H1 (cell line): ENCODE measurements at regions of chr9 and their contacts with region 1.

Region 1: GRCh38 chr9:136482793-136483588 is at the start of gene SEC16A:
- DNase-seq: peak; percentile 97 to 99
- H3K4me3 ChIP-seq: peak within 1 kb of the TSS; percentile 75 to 98 (median 86)
- H3K27ac ChIP-seq: peak within 1 kb of the TSS; percentile 100
- H3K4me1 ChIP-seq: peaks cover 2 to 13% (median 3%) of the 10 kb centered on the region in 4 experiments
- H3K27me3 ChIP-seq: no peaks in the 10 kb centered on the region
- CTCF ChIP-seq: no peak
- EP300 ChIP-seq: peak in 1 of 2 experiments; percentile 7; a peak in 1 of 3 replicates
- POLR2A ChIP-seq: peak in 1 of 2 experiments; percentile 37; a peak in 1 of 3 replicates
- RAD21 ChIP-seq: no peak
- total RNA-seq, gene SEC16A: 47.1 and 49.0 TPM in 2 replicates

Region 2: DNA sequence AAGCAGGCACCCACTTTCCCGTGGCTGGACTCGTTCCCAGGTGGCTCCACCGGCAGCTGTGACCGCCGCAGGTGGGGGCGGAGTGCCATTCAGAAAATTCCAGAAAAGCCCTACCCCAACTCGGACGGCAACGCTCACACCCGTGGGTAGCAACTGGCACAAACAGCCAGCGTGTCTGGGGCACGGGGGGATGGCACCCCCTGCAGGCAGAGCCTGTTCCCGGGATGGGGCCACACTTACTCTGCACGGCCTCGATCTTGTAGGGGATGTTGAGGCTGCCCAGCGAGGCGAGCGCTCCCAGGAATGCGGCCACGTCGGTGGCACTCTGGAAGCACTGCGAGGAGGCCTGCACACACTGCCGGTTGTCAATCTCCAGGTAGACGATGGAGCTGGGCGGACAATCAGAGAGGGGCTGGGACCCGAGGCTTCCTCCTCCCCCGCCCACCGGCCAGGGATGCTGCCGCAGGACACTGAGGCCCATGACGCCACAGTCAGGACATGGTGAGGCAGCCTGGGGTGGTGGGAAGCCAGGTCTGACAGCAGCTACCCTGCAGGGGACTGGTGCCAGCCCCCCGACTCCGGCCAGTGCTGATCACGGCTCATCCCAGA is 20.1 kb after region 1 on chr9:
- CTCF ChIA-PET with region 1: interaction called, 47 read pairs
- POLR2A ChIA-PET with region 1: no interaction called
- DNase-seq: no peak
- H3K4me3 ChIP-seq: no peak overlapping the region
- H3K27ac ChIP-seq: no peak overlapping the region
- H3K4me1 ChIP-seq: no peaks in the 10 kb centered on the region
- H3K27me3 ChIP-seq: no peaks in the 10 kb centered on the region
- CTCF ChIP-seq: peak in 1 of 3 experiments; percentile 22; a peak in 1 of 4 replicates
- EP300 ChIP-seq: no peak
- POLR2A ChIP-seq: no peak
- RAD21 ChIP-seq: peak in 1 of 2 experiments; percentile 8; a peak in 1 of 4 replicates

Region 3: DNA sequence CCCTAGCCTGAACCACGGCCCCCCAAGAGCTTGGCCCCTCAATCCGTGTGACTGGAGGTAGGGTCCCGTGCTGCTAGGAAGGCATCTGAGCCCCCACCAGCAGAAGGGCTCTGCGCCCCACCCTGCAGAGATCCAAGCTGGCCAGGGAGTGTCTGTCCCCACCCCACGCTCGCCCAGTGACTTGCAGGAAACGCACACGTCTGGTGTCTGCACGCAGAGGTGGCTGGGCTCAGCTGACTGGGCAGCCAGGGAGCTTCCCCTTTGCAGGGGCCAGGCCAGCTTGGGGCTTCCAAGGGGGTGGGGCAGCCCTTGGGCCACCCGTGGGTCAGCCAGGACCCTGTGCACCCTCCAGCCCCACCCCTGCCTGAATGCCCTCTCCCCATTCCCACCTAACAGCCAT is 38.5 kb after region 1 on chr9:
- CTCF ChIA-PET with region 1: interaction called, 25 read pairs
- POLR2A ChIA-PET with region 1: no interaction called
- DNase-seq: no peak
- H3K4me3 ChIP-seq: no peak overlapping the region
- H3K27ac ChIP-seq: no peak overlapping the region
- H3K4me1 ChIP-seq: peaks cover 0 to 4% (median 3%) of the 10 kb centered on the region in 4 experiments; a peak in 3 of 7 replicates
- H3K27me3 ChIP-seq: no peaks in the 10 kb centered on the region
- CTCF ChIP-seq: no peak
- EP300 ChIP-seq: no peak
- POLR2A ChIP-seq: no peak
- RAD21 ChIP-seq: no peak

Region 4: DNA sequence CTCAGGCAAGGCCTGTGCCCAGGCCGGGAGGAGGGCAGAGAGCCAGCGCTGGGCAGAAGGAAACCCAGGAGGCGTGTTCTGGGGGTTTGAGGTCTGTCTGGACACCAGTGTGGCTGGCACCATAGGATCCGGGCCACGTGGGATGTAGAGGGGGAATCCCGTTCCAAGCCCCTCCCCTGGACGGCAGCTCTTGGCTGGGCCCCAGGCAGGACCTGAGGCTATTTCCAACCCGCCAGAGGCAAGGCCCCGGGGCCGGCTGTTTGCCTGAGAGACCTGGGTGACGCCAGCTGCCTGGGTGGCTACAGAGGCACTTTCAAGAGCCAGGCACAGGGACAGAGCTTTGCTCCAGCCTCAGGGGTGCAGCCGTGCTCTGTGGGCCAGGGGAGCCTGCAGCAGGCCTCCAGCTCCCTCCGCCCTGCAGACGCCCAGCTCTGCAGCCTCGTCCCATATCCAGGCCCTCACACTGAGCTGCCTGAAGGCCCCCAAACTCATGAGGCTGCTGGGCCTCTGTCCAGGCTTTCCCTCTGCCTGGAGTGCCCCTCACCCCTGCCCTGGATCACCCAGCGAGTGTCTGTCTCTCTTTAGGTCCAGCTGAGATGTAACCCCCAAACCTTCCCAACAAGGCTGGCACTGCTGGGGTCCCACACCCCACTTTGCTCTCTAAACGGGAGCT is 123.1 kb after region 1 on chr9:
- CTCF ChIA-PET with region 1: interaction called, 13 read pairs
- POLR2A ChIA-PET with region 1: interaction called, 3 read pairs
- DNase-seq: no peak
- H3K4me3 ChIP-seq: no peak overlapping the region
- H3K27ac ChIP-seq: no peak overlapping the region
- H3K4me1 ChIP-seq: peaks cover 0 to 32% (median 15%) of the 10 kb centered on the region in 4 experiments; a peak in 5 of 7 replicates
- H3K27me3 ChIP-seq: 0 out of 7 replicates have a peak, but pooled peaks cover 0 to 2% (median 0%) of the 10 kb centered on the region in 4 experiments
- CTCF ChIP-seq: no peak
- EP300 ChIP-seq: no peak
- POLR2A ChIP-seq: no peak
- RAD21 ChIP-seq: no peak

Region 5: GRCh38 chr9:136631038-136632000 is 148.3 kb after region 1 on chr9:
- CTCF ChIA-PET with region 1: interaction called, 253 read pairs
- POLR2A ChIA-PET with region 1: interaction called, 4 read pairs
- DNase-seq: peak; percentile 27 to 86
- H3K4me3 ChIP-seq: no peak overlapping the region
- H3K27ac ChIP-seq: no peak overlapping the region; the same call in 1 of the 2 replicates
- H3K4me1 ChIP-seq: peaks cover 0 to 9% (median 0%) of the 10 kb centered on the region in 4 experiments; a peak in 3 of 7 replicates
- H3K27me3 ChIP-seq: no peaks in the 10 kb centered on the region
- CTCF ChIP-seq: peak in 2 of 3 experiments; percentile 86 to 87; a peak in 3 of 4 replicates
- EP300 ChIP-seq: no peak
- POLR2A ChIP-seq: no peak
- RAD21 ChIP-seq: peak; percentile 94 to 95

Region 6: GRCh38 chr9:136644598-136645351 is 161.8 kb after region 1 on chr9:
- CTCF ChIA-PET with region 1: interaction called, 237 read pairs
- POLR2A ChIA-PET with region 1: interaction called, 4 read pairs
- DNase-seq: peak in 1 of 2 experiments; percentile 93
- H3K4me3 ChIP-seq: peak overlapping the region in 2 of 4 experiments; percentile 10 to 45; a peak in 1 of 8 replicates
- H3K27ac ChIP-seq: no peak overlapping the region
- H3K4me1 ChIP-seq: peaks cover 0 to 10% (median 3%) of the 10 kb centered on the region in 4 experiments; a peak in 4 of 7 replicates
- H3K27me3 ChIP-seq: peaks cover 0 to 6% (median 0%) of the 10 kb centered on the region in 4 experiments; a peak in 1 of 7 replicates
- CTCF ChIP-seq: peak; percentile 82 to 95 (median 88)
- EP300 ChIP-seq: no peak
- POLR2A ChIP-seq: no peak
- RAD21 ChIP-seq: peak; percentile 84 to 89